Posterior cingulate gyrus (tissue), 11 donors: ENCODE measurements at regions of chr20 and their contacts with region 1.

Region 1: GRCh38 chr20:37406010-37406998 is 60.4 kb downstream of the SRC start:
- DNase-seq: peak in 7 of 10 donors; percentile 36 to 94 (median 58)

Region 2: DNA sequence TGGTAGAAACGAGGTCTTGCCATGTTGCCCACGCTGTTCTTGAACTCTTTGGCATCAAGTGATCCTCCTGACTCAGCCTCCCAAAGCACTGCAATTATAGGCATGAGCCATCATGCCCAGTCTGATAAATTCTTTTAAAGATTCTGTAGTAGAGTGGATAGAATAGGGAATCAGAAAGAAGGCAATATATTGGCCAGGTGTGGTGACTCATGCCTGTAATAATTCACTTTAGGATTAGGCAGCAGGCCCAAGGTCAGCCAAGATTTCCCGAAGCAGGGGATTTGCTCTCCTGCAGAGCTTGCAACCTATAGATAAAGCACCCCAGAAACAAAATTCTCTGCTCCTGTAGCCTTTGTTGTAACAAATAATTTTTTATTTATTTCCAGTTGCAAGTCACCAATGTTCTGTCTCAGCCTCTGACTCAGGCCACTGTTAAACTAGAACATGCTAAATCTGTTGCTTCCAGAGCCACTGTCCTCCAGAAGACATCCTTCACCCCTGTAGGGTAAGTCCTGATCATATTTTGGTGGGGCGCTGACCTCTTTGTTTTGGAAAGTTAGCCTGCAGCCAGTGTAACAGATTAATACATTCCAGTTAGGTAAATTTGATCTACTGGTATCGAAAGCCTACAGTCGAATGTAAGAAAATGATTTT is 196.5 kb before region 1 on chr20:
- intact Hi-C with region 1: no loop called
- DNase-seq: no peak

Region 3: GRCh38 chr20:37336369-37337207 is 69.7 kb before region 1 on chr20:
- intact Hi-C with region 1: no loop called
- DNase-seq: peak in 3 of 10 donors; percentile 35 to 72 (median 65)

Region 4: GRCh38 chr20:37449276-37449675 is 43.0 kb after region 1 on chr20:
- intact Hi-C with region 1: no loop called
- DNase-seq: peak in 1 of 10 donors; percentile 77

Region 5: DNA sequence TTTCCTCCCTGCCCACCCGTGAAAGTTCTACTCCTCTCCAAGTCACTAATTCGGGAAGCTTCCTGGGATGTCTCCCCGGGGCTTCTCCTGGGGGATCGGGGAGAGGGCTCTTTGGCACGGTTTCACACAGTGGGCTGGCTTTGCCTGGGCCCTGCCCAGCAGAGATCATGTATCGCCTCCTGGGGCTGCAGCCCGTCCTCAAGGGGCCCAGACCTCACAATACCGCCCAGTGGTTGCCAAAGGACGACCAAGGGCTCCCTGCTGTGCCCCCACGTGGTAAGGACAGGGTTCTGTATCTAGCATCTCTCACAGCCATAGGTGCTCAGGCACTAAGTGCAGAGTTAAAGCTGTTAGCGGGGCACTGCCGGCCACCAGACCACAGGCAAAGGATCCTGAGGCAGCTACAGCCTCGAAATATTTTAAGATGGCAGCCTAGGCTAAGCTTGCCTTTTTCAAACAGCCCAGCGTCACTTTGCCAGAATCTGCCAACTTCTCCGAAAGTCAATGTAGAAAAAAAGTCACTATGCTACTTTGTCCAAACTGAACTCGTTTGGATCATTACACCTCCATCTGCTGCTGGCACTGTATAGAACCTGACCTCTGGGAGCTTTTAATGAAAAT is 113.3 kb after region 1 on chr20:
- intact Hi-C with region 1: loop called (anchors 5 kb)
- DNase-seq: peak in 1 of 10 donors; percentile 36

Region 6: GRCh38 chr20:37864298-37864697 is 458.0 kb after region 1 on chr20:
- intact Hi-C with region 1: no loop called
- DNase-seq: no peak